Natural killer cell (primary cell): ENCODE measurements at regions of chr7 and their contacts with region 1.

Region 1: GRCh38 chr7:130982160-130982638 is 248.2 kb upstream of the KLF14 start:
- DNase-seq: peak in 1 of 2 donors; percentile 77
- ATAC-seq: peak; percentile 61 to 78 (median 62)
- H3K4me3 ChIP-seq: no peak overlapping the region
- H3K4me3 Mint-ChIP-seq: no peak overlapping the region
- H3K27ac ChIP-seq: peak overlapping the region; percentile 60
- H3K27ac Mint-ChIP-seq: no peak overlapping the region
- H3K4me1 ChIP-seq: peaks cover 25% of the 10 kb centered on the region
- H3K4me1 Mint-ChIP-seq: peaks cover 36 to 38% of the 10 kb centered on the region in 2 donors
- H3K27me3 ChIP-seq: no peaks in the 10 kb centered on the region
- H3K27me3 Mint-ChIP-seq: no peaks in the 10 kb centered on the region
- CTCF ChIP-seq: peak; percentile 68

Region 2: GRCh38 chr7:130845581-130846085 is 136.6 kb before region 1 on chr7:
- intact Hi-C with region 1: no loop called
- DNase-seq: no peak
- ATAC-seq: no peak
- H3K4me3 ChIP-seq: no peak overlapping the region
- H3K4me3 Mint-ChIP-seq: no peak overlapping the region
- H3K27ac ChIP-seq: no peak overlapping the region
- H3K27ac Mint-ChIP-seq: no peak overlapping the region
- H3K4me1 ChIP-seq: peaks cover 9% of the 10 kb centered on the region
- H3K4me1 Mint-ChIP-seq: peaks cover 0 to 11% of the 10 kb centered on the region in 2 donors
- H3K27me3 ChIP-seq: no peaks in the 10 kb centered on the region
- H3K27me3 Mint-ChIP-seq: peaks cover 13 to 27% of the 10 kb centered on the region in 2 donors
- CTCF ChIP-seq: no peak

Region 3: GRCh38 chr7:131040467-131040932 is 58.3 kb after region 1 on chr7:
- intact Hi-C with region 1: loop called (anchors 5 kb)
- DNase-seq: peak in 1 of 2 donors; percentile 83
- ATAC-seq: peak; percentile 49 to 74 (median 50)
- H3K4me3 ChIP-seq: no peak overlapping the region
- H3K4me3 Mint-ChIP-seq: peak overlapping the region; percentile 31
- H3K27ac ChIP-seq: peak overlapping the region; percentile 41
- H3K27ac Mint-ChIP-seq: peak overlapping the region; percentile 65 to 68
- H3K4me1 ChIP-seq: no peaks in the 10 kb centered on the region
- H3K4me1 Mint-ChIP-seq: peaks cover 63 to 66% of the 10 kb centered on the region in 2 donors
- H3K27me3 ChIP-seq: no peaks in the 10 kb centered on the region
- H3K27me3 Mint-ChIP-seq: no peaks in the 10 kb centered on the region
- CTCF ChIP-seq: peak; percentile 90

Region 4: GRCh38 chr7:131052285-131052904 is 70.2 kb after region 1 on chr7:
- intact Hi-C with region 1: no loop called
- DNase-seq: no peak
- ATAC-seq: no peak
- H3K4me3 ChIP-seq: no peak overlapping the region
- H3K4me3 Mint-ChIP-seq: peak overlapping the region; percentile 18
- H3K27ac ChIP-seq: no peak overlapping the region
- H3K27ac Mint-ChIP-seq: peak overlapping the region in 1 of 2 donors; percentile 30
- H3K4me1 ChIP-seq: peaks cover 35% of the 10 kb centered on the region
- H3K4me1 Mint-ChIP-seq: peaks cover 69 to 72% of the 10 kb centered on the region in 2 donors
- H3K27me3 ChIP-seq: no peaks in the 10 kb centered on the region
- H3K27me3 Mint-ChIP-seq: no peaks in the 10 kb centered on the region
- CTCF ChIP-seq: no peak